Heart left ventricle (tissue), 16 donors: ENCODE measurements at regions of chr6 and their contacts with region 1.

Region 1: DNA sequence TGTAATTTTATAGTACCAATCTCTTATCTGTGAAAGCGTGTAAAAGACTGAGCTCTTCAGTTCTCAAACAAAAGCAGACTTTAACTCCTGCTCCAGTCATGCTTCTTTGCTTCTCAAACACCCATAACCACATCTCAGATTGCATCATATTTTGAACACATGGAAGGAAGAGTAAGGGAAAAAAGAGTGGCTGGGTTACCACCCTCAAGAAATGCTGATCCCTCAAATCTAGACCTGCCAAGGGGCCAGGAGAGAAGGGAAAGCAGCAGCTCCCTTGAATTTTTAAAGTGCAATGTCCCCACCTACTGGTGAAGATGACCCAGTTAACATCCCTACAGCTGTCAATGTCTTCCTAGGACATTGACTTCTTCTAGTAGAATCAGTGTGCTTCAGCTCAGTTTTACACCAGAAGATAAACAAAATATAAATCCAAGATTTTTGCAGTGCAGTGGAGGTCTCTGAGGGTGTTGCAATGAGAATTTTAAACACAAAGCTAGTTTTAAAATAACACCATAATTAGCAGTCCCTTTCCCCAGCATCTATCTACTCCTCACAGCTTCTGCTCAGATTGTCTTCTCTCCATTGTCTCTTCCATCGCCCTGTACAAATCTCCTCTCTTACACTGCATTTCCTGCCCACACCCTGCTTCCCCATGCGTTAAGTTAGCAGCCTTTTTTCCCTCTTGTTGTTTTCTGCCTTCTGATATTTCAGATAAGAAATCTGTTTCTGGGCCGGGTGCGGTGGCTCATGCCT is 22.6 kb upstream of the HLA-DQB2 start:
- DNase-seq: peak in 2 of 5 donors; percentile 38
- ATAC-seq: peak in 3 of 4 donors; percentile 73 to 90 (median 82)
- H3K4me3 ChIP-seq: no peak overlapping the region
- H3K27ac ChIP-seq: no peak overlapping the region
- H3K4me1 ChIP-seq: peaks cover 0 to 4% (median 0%) of the 10 kb centered on the region in 12 donors
- H3K27me3 ChIP-seq: peaks cover 0 to 39% (median under 1%) of the 10 kb centered on the region in 9 donors
- CTCF ChIP-seq: peak in 11 of 12 donors; percentile 33 to 66 (median 50)
- POLR2A ChIP-seq: no peak

Region 2: GRCh38 chr6:32424589-32425300 is 361.2 kb before region 1 on chr6:
- intact Hi-C with region 1: loop called in 2 of 10 experiments (anchors 5 kb)
- DNase-seq: no peak
- ATAC-seq: no peak
- H3K4me3 ChIP-seq: no peak overlapping the region
- H3K27ac ChIP-seq: no peak overlapping the region
- H3K4me1 ChIP-seq: no peaks in the 10 kb centered on the region
- H3K27me3 ChIP-seq: peaks cover 0 to 20% (median 0%) of the 10 kb centered on the region in 9 donors
- CTCF ChIP-seq: no peak
- POLR2A ChIP-seq: no peak

Region 3: DNA sequence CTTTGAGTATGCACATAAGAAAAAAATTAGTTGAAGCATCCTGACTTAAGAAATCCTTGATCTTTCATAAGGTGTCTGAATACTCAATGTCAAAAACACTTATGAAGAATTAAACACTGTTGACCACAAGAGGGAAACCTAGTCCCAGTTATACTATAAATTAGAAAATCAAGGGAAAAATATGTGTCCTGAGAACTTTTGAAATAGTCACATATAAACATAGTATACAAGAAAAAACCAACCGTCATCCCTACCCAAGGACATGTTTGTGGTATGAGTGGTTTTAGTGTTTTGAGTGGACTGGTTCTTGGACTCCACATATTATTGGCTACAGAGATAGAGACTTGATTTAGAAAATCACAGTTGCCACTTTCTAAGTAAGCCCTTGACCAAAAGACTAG is 353.9 kb before region 1 on chr6:
- intact Hi-C with region 1: loop called in 4 of 10 experiments (anchors 5 kb)
- DNase-seq: no peak
- ATAC-seq: no peak
- H3K4me3 ChIP-seq: no peak overlapping the region
- H3K27ac ChIP-seq: no peak overlapping the region
- H3K4me1 ChIP-seq: peaks cover 0 to 9% (median 0%) of the 10 kb centered on the region in 12 donors
- H3K27me3 ChIP-seq: peaks cover 0 to 14% (median 0%) of the 10 kb centered on the region in 9 donors
- CTCF ChIP-seq: peak; percentile 16 to 66 (median 42)
- POLR2A ChIP-seq: no peak

Region 4: GRCh38 chr6:32713241-32713640 is 72.7 kb before region 1 on chr6:
- intact Hi-C with region 1: loop called in 4 of 10 experiments (anchors 5 to 10 kb)
- DNase-seq: no peak
- ATAC-seq: no peak
- H3K4me3 ChIP-seq: no peak overlapping the region
- H3K27ac ChIP-seq: no peak overlapping the region
- H3K4me1 ChIP-seq: no peaks in the 10 kb centered on the region
- H3K27me3 ChIP-seq: peaks cover 0 to 12% (median 0%) of the 10 kb centered on the region in 9 donors
- CTCF ChIP-seq: no peak
- POLR2A ChIP-seq: no peak

Region 5: GRCh38 chr6:32718879-32719278 is 67.1 kb before region 1 on chr6:
- intact Hi-C with region 1: loop called in 2 of 10 experiments (anchors 5 to 10 kb)
- DNase-seq: no peak
- ATAC-seq: no peak
- H3K4me3 ChIP-seq: no peak overlapping the region
- H3K27ac ChIP-seq: no peak overlapping the region
- H3K4me1 ChIP-seq: no peaks in the 10 kb centered on the region
- H3K27me3 ChIP-seq: peaks cover 0 to 52% (median 0%) of the 10 kb centered on the region in 9 donors
- CTCF ChIP-seq: no peak
- POLR2A ChIP-seq: no peak

Region 6: DNA sequence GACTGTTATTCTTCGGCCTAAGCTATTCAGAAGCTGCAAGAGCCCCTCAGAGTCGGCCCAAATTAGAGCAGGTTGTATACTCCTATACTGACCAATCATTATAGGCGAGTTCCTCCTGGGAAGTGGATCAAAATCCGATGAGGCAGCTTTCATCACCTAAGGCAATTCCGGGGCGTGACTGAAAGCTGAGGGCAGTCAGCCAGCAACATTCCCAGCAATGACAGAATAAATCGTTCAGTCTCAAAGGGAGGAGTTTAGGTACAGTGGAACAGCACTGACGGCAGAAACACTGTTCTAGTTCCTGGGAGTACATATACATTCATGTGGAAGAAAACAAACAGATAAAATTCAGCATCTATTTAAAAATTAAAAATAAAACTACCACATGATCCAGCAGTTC is 33.4 kb before region 1 on chr6:
- intact Hi-C with region 1: no loop called
- DNase-seq: no peak
- ATAC-seq: no peak
- H3K4me3 ChIP-seq: no peak overlapping the region
- H3K27ac ChIP-seq: no peak overlapping the region
- H3K4me1 ChIP-seq: no peaks in the 10 kb centered on the region
- H3K27me3 ChIP-seq: peaks cover 0 to 49% (median 4%) of the 10 kb centered on the region in 9 donors
- CTCF ChIP-seq: no peak
- POLR2A ChIP-seq: no peak

Region 7: GRCh38 chr6:32838114-32838958 is 52.4 kb after region 1 on chr6 and contains the start of gene TAP2:
- intact Hi-C with region 1: no loop called
- DNase-seq: peak; percentile 95 to 98 (median 96)
- ATAC-seq: peak; percentile 95 to 97 (median 96)
- H3K4me3 ChIP-seq: peak within 1 kb of the TSS; percentile 60 to 96 (median 78)
- H3K27ac ChIP-seq: peak within 1 kb of the TSS; percentile 69 to 100 (median 96)
- H3K4me1 ChIP-seq: peaks cover 0 to 60% (median 19%) of the 10 kb centered on the region in 12 donors
- H3K27me3 ChIP-seq: no peaks in the 10 kb centered on the region
- CTCF ChIP-seq: peak; percentile 92 to 99 (median 97)
- POLR2A ChIP-seq: peak in 1 of 2 donors; percentile 35
- total RNA-seq, gene TAP2: 5.4 to 107 (median 14.9) TPM